ENCODE measurements at regions of chr9 and their contacts with region 1.

Region 1: DNA sequence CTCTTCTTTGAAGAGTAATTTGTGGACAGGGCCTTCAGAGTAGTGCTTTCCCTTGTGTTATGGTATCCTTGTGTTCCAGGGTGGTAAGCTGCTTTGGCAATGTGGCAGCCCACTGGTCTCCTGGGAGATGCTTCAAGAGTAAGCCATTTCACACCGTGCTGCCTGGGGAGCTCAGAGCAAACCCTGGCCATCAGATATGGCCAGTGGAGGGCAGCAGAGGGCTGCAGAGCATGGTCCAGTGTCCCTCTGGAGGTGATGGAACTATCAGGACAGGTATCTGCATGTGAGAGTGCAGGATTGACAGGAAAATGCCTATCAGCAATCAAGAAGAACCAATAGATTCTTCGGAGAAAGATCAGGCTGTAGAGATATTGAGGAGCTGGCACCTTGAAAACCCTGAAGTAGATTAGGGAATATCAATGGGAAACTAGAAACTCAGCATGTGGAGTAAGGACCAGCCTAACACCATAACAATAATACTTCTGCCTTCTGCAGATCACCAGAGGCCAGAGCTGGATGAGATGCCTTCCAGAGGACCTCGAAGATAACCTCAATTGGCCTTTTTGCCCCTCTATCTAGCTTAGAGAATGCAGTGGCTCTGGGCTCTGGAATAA is 90.8 kb downstream of the PLPPR1 start:
- DNase-seq: peak; percentile 64
- H3K4me3 Mint-ChIP-seq: no peak overlapping the region
- H3K27ac Mint-ChIP-seq: no peak overlapping the region
- H3K4me1 Mint-ChIP-seq: no peaks in the 10 kb centered on the region
- H3K27me3 Mint-ChIP-seq: peaks cover 47% of the 10 kb centered on the region
- CTCF ChIP-seq: peak; percentile 75

Region 2: DNA sequence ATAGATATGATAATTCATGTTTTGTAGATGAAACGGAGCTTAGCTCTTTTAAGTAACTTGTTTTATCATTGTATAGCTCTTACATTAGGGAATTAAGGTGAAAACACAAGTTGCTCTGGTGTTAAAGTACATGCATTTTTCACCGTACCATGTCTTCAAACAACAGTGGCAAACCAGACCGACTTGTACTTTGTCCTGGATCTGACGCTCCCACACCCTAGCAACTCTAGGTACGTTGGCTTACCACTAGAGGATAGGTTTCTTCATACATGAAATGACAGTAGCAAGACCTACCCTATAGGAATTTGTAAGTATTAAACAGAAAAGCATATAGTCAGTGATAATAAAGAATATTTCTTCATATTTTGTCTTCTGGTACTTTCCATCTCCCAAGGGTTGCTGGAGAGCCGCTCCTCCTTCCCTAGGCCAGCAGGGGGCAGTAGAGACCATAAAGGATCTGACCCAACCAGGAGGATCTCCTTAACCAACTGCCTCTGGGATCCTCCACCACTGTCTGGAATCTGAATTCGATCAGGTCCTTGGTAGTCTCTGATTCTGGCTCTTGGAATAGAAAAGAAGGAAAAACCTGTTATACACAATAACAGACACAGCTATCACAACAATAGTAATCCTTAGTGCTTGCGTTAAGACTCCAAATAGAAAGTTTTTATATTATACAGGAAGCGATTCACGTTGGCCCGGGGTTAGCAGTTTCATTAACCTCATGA is 404.8 kb before region 1 on chr9:
- CTCF ChIA-PET with region 1: interaction called, 28 read pairs
- POLR2A ChIA-PET with region 1: no interaction called
- intact Hi-C with region 1: loop called (anchors 2 kb)
- DNase-seq: peak; percentile 77
- H3K4me3 Mint-ChIP-seq: no peak overlapping the region
- H3K27ac Mint-ChIP-seq: no peak overlapping the region
- H3K4me1 Mint-ChIP-seq: no peaks in the 10 kb centered on the region
- H3K27me3 Mint-ChIP-seq: peaks cover under 1% of the 10 kb centered on the region
- CTCF ChIP-seq: peak; percentile 89

Region 3: GRCh38 chr9:101093620-101094019 is 25.7 kb before region 1 on chr9:
- CTCF ChIA-PET with region 1: interaction called, 22 read pairs
- POLR2A ChIA-PET with region 1: no interaction called
- intact Hi-C with region 1: no loop called
- DNase-seq: peak; percentile 46
- H3K4me3 Mint-ChIP-seq: no peak overlapping the region
- H3K27ac Mint-ChIP-seq: no peak overlapping the region
- H3K4me1 Mint-ChIP-seq: no peaks in the 10 kb centered on the region
- H3K27me3 Mint-ChIP-seq: peaks cover 30% of the 10 kb centered on the region
- CTCF ChIP-seq: no peak

Region 4: GRCh38 chr9:101132801-101133200 is 13.5 kb after region 1 on chr9:
- CTCF ChIA-PET with region 1: interaction called, 63 read pairs
- POLR2A ChIA-PET with region 1: no interaction called
- intact Hi-C with region 1: no loop called
- DNase-seq: no peak
- H3K4me3 Mint-ChIP-seq: no peak overlapping the region
- H3K27ac Mint-ChIP-seq: no peak overlapping the region
- H3K4me1 Mint-ChIP-seq: no peaks in the 10 kb centered on the region
- H3K27me3 Mint-ChIP-seq: peaks cover 26% of the 10 kb centered on the region
- CTCF ChIP-seq: no peak

Region 5: DNA sequence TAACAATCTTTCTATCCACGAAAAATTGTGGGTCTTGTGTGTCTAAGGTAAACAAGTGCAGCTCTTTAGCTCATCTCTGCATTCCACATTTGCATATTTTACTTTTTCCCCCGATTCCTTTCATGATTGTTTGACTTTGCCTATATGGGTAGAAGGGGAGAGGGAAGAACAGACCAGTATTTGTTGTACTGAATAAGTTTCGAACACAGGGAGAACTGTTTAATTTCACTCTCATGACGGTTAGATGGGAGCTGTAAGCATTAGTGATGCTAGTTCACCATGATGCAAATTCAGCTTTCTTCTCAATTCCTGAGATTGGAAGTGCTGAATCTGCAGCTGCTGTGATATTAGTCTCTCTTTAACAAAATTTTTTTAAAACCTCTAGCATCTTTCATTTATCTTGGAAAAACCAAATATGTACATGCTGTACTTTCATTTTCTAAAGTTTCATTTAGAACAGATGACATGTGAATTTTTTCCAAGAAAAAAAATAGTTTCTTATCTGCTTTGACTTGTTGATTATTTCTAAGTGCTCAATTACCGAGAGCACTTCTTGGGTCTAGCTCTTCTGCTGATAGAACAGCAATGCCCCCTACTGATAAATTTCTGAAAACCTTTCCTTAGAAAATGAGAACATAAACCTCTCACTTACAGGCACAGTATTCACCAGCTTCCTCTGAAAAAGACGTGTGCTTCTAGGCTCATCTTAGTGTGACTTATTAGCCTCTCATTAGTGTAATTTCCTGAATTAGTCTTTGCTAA is 116.0 kb after region 1 on chr9:
- CTCF ChIA-PET with region 1: interaction called, 23 read pairs
- POLR2A ChIA-PET with region 1: no interaction called
- intact Hi-C with region 1: loop called (anchors 1 kb)
- DNase-seq: peak; percentile 42
- H3K4me3 Mint-ChIP-seq: no peak overlapping the region
- H3K27ac Mint-ChIP-seq: no peak overlapping the region
- H3K4me1 Mint-ChIP-seq: no peaks in the 10 kb centered on the region
- H3K27me3 Mint-ChIP-seq: peaks cover 2% of the 10 kb centered on the region
- CTCF ChIP-seq: peak; percentile 56

Region 6: GRCh38 chr9:101311758-101312420 is 192.6 kb after region 1 on chr9:
- CTCF ChIA-PET with region 1: interaction called, 82 read pairs
- POLR2A ChIA-PET with region 1: interaction called, 4 read pairs
- intact Hi-C with region 1: loop called (anchors 1 kb)
- DNase-seq: peak; percentile 84
- H3K4me3 Mint-ChIP-seq: no peak overlapping the region
- H3K27ac Mint-ChIP-seq: no peak overlapping the region
- H3K4me1 Mint-ChIP-seq: peaks cover 7% of the 10 kb centered on the region
- H3K27me3 Mint-ChIP-seq: peaks cover 11% of the 10 kb centered on the region
- CTCF ChIP-seq: peak; percentile 54

Measured in MCF 10A (cell line).